Endothelial cell of umbilical vein (primary cell): ENCODE measurements at regions of chr10 and their contacts with region 1.

Region 1: GRCh38 chr10:89563861-89564478 is 28.6 kb upstream of the SLC16A12 start:
- DNase-seq: peak; percentile 56
- H3K4me3 ChIP-seq: no peak overlapping the region
- H3K27ac ChIP-seq: no peak overlapping the region
- H3K4me1 ChIP-seq: no peaks in the 10 kb centered on the region
- H3K27me3 ChIP-seq: peaks cover 0 to 5% of the 10 kb centered on the region in 2 experiments
- CTCF ChIP-seq: peak; percentile 31 to 46
- POLR2A ChIP-seq: no peak

Region 2: DNA sequence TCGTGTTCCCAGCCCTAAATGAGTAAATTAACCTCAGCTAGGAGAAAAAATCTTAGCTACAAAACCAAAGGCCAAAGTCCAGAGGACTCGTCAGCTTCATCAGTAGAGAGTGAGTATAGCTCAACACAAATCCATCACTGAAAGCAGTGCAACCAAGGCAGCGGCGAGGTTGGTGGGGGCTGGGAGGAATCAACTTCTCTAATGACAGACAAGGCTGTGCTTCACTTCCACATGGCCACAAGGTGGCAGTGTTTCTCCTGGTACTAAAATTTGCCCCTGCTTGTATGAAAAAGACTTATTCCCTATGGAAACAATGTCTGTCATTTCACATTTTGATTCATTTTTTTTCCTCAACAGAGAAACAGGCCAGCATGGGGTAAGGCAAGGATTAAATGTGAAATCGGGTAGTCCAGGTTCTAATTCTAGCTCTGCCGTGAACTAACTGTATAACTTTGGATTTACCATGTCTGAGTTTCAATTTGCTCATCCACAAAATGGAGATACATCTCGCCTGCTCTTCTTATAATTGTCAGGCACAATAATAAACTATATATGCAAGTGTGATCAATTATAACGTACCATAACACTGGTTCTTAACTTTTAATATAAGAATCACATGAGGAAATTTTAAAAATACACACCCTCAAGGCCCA is 534.1 kb before region 1 on chr10:
- CTCF ChIA-PET with region 1: no interaction called
- POLR2A ChIA-PET with region 1: no interaction called
- dilution Hi-C with region 1: no loop called
- intact Hi-C with region 1: loop called (anchors 5 kb)
- DNase-seq: peak; percentile 79
- H3K4me3 ChIP-seq: no peak overlapping the region
- H3K27ac ChIP-seq: no peak overlapping the region
- H3K4me1 ChIP-seq: peaks cover 19% of the 10 kb centered on the region
- H3K27me3 ChIP-seq: peaks cover 0 to 2% of the 10 kb centered on the region in 2 experiments
- CTCF ChIP-seq: peak; percentile 66 to 84
- POLR2A ChIP-seq: no peak

Region 3: GRCh38 chr10:89355394-89355931 is 208.5 kb before region 1 on chr10:
- CTCF ChIA-PET with region 1: no interaction called
- POLR2A ChIA-PET with region 1: no interaction called
- dilution Hi-C with region 1: no loop called
- intact Hi-C with region 1: no loop called
- DNase-seq: no peak
- H3K4me3 ChIP-seq: no peak overlapping the region
- H3K27ac ChIP-seq: no peak overlapping the region
- H3K4me1 ChIP-seq: peaks cover 10% of the 10 kb centered on the region
- H3K27me3 ChIP-seq: peaks cover 2 to 9% of the 10 kb centered on the region in 2 experiments
- CTCF ChIP-seq: no peak
- POLR2A ChIP-seq: no peak

Region 4: DNA sequence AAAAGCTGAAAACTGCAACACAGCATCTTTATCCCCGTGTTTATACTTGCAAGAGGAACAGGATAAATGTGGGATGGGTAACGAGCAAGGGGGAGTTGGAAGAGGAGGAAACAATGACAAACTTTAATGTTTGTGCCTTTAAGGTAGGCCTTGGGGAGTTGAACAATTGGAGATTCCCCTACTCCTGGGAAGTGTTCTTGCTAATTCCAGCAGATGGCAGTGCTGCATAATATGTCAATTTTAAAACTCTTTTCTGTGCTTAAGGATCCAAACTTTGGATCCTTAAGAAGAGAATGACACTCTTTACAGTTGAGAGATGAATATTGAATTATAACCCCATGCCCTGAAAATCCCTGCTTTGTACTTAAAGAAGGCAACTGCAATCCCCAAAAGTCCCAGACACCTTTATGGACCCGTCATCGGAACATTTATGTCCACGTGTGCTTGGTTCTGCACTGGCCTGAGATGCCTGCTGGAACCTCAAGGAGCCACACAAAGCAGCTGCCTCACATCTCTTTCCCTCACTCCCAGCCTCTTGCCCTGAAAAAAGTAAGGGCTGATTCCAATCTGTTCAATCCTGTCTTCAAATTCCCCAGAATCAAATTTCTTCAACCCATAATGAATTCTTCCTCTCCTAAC is 137.6 kb before region 1 on chr10:
- CTCF ChIA-PET with region 1: interaction called, 41 read pairs
- POLR2A ChIA-PET with region 1: no interaction called
- dilution Hi-C with region 1: no loop called
- intact Hi-C with region 1: loop called (anchors 1 kb)
- DNase-seq: peak; percentile 56
- H3K4me3 ChIP-seq: no peak overlapping the region
- H3K27ac ChIP-seq: no peak overlapping the region
- H3K4me1 ChIP-seq: no peaks in the 10 kb centered on the region
- H3K27me3 ChIP-seq: no peaks in the 10 kb centered on the region
- CTCF ChIP-seq: peak; percentile 58
- POLR2A ChIP-seq: no peak

Region 5: GRCh38 chr10:89466599-89467035 is 97.4 kb before region 1 on chr10:
- CTCF ChIA-PET with region 1: interaction called, 11 read pairs
- POLR2A ChIA-PET with region 1: no interaction called
- dilution Hi-C with region 1: no loop called
- intact Hi-C with region 1: no loop called
- DNase-seq: peak; percentile 31
- H3K4me3 ChIP-seq: no peak overlapping the region
- H3K27ac ChIP-seq: no peak overlapping the region
- H3K4me1 ChIP-seq: peaks cover 13% of the 10 kb centered on the region
- H3K27me3 ChIP-seq: no peaks in the 10 kb centered on the region
- CTCF ChIP-seq: peak; percentile 16 to 38
- POLR2A ChIP-seq: no peak

Region 6: DNA sequence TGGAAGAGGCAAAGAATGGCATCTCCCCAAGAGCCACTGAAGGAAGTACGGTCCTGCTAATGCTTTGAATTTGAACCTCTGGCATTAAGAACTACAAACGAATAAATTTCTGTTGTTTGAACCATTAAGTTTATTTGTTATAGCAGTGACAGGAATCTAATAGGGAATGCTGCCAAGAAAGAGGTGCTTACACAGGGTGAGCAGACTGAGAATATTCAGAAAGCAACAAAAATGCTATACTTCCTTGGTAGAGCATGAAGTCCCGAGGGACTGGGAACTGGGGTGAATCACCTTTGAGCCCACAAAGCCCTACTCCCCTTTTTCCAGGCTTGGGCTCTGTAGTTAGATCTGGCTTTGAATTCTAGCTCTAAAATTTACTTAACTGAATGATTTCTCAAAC is 36.1 kb after region 1 on chr10:
- CTCF ChIA-PET with region 1: no interaction called
- POLR2A ChIA-PET with region 1: no interaction called
- dilution Hi-C with region 1: no loop called
- intact Hi-C with region 1: no loop called
- DNase-seq: no peak
- H3K4me3 ChIP-seq: no peak overlapping the region
- H3K27ac ChIP-seq: no peak overlapping the region
- H3K4me1 ChIP-seq: no peaks in the 10 kb centered on the region
- H3K27me3 ChIP-seq: no peaks in the 10 kb centered on the region
- CTCF ChIP-seq: no peak
- POLR2A ChIP-seq: no peak

Region 7: GRCh38 chr10:89643431-89644331 is 79.7 kb after region 1 on chr10:
- CTCF ChIA-PET with region 1: no interaction called
- POLR2A ChIA-PET with region 1: no interaction called
- dilution Hi-C with region 1: no loop called
- intact Hi-C with region 1: loop called (anchors 5 kb)
- DNase-seq: peak; percentile 92
- H3K4me3 ChIP-seq: peak overlapping the region; percentile 23 to 62 (median 61)
- H3K27ac ChIP-seq: peak overlapping the region; percentile 2
- H3K4me1 ChIP-seq: peaks cover 12% of the 10 kb centered on the region
- H3K27me3 ChIP-seq: no peaks in the 10 kb centered on the region
- CTCF ChIP-seq: no peak
- POLR2A ChIP-seq: peak; percentile 75